Psoas muscle (tissue), 8 donors: ENCODE measurements at regions of chr18 and their contacts with region 1.

Region 1: DNA sequence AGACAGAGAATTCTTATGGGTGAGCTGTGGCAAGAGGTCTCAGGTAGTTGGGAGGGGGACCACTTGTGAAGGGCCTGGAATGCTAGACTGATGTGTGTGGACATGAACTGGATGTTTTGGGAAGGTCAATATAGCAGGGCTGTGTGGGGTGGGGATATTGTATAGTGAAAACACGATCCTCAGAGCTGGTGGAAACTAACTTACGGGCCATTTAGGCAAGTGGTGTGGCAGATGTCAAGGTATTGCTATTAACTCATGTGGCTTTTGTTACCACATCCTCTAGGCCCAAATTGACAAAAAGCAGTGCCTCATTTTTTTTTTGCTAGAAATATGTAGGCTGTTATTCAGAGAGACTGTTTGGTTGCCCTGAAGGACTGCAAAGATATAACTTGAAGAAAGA is 8.0 kb upstream of the GALNT1 start:
- DNase-seq: no peak
- ATAC-seq: no peak
- H3K4me3 ChIP-seq: no peak overlapping the region
- H3K27ac ChIP-seq: peak overlapping the region; percentile 61
- H3K4me1 ChIP-seq: peaks cover 10% of the 10 kb centered on the region
- H3K27me3 ChIP-seq: no peaks in the 10 kb centered on the region
- CTCF ChIP-seq: no peak

Region 2: GRCh38 chr18:35497370-35498197 is 75.9 kb before region 1 on chr18 and contains the start of gene INO80C:
- intact Hi-C with region 1: loop called in 1 of 2 experiments (anchors 2 kb)
- DNase-seq: peak; percentile 91 to 96
- ATAC-seq: peak; percentile 97 to 99 (median 98)
- H3K4me3 ChIP-seq: peak within 1 kb of the TSS; percentile 78
- H3K27ac ChIP-seq: peak within 1 kb of the TSS; percentile 96
- H3K4me1 ChIP-seq: peaks cover 29% of the 10 kb centered on the region
- H3K27me3 ChIP-seq: no peaks in the 10 kb centered on the region
- CTCF ChIP-seq: no peak
- total RNA-seq, gene INO80C: 14.4 to 21.1 (median 18.3) TPM

Region 3: GRCh38 chr18:35803551-35803950 is 230.0 kb after region 1 on chr18:
- intact Hi-C with region 1: no loop called
- DNase-seq: no peak
- ATAC-seq: no peak
- H3K4me3 ChIP-seq: no peak overlapping the region
- H3K27ac ChIP-seq: no peak overlapping the region
- H3K4me1 ChIP-seq: no peaks in the 10 kb centered on the region
- H3K27me3 ChIP-seq: peaks cover 0 to 8% (median 0%) of the 10 kb centered on the region in 3 donors
- CTCF ChIP-seq: no peak